Sigmoid colon (tissue), 7 donors: ENCODE measurements at regions of chr12 and their contacts with region 1.

Region 1: DNA sequence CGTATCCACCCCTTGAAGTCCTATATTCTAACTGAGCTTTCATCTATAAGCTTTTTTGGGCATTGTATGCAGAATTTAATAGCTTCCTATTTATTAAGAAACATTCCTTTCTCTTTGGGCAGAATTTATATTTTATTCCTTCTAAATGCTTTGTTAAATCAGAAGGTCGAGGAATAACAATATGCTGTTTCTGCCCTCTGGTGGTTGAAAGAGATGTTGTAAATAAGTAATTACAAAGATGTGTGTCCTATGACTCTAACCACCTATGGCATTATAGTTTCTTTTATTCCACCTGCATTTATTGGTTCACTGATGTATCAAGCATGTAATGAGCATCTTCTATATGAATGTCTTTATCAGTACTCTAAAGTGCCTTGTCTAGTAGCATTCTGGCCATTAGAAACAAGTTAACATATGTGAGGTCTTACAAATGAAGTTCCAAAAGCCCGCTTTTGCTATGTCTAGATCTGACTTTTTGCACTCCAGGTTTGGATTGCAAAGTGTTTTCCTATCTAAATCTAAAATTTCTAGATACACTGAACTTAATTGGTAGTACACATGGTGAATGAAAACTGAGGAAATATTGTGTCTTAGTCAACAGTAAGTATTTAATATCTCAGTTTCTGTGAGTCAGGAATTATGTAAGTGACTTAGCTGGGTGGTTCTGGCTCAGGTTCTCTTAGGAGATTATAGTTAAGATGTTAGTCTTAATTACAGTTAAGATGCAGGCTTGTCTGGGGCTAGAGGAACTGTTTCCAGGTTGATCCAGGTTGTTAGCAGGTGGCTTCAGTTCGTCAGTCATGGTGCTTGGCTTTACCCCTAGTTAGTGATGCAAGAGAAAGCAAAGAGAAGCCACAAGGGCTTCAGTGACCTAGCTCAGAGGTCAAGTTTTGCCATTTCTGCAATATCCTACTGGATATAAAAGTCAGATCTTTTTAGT is 57.5 kb downstream of the PLEKHA5 start:
- DNase-seq: no peak
- H3K4me3 ChIP-seq: no peak overlapping the region
- H3K27ac ChIP-seq: no peak overlapping the region
- H3K4me1 ChIP-seq: peaks cover 0 to 27% (median 13%) of the 10 kb centered on the region in 4 donors
- H3K27me3 ChIP-seq: no peaks in the 10 kb centered on the region
- CTCF ChIP-seq: peak; percentile 34 to 68 (median 60)
- EP300 ChIP-seq: no peak
- POLR2A ChIP-seq: no peak

Region 2: GRCh38 chr12:18250313-18250916 is 936.6 kb before region 1 on chr12:
- intact Hi-C with region 1: loop called (anchors 2 kb)
- DNase-seq: no peak
- H3K4me3 ChIP-seq: no peak overlapping the region
- H3K27ac ChIP-seq: no peak overlapping the region
- H3K4me1 ChIP-seq: no peaks in the 10 kb centered on the region
- H3K27me3 ChIP-seq: no peaks in the 10 kb centered on the region
- CTCF ChIP-seq: peak in 2 of 4 experiments; percentile 56 to 60
- EP300 ChIP-seq: no peak
- POLR2A ChIP-seq: no peak

Region 3: GRCh38 chr12:18430425-18431048 is 756.5 kb before region 1 on chr12:
- intact Hi-C with region 1: loop called (anchors 5 kb)
- DNase-seq: no peak
- H3K4me3 ChIP-seq: no peak overlapping the region
- H3K27ac ChIP-seq: no peak overlapping the region
- H3K4me1 ChIP-seq: peaks cover 0 to 6% (median 1%) of the 10 kb centered on the region in 4 donors
- H3K27me3 ChIP-seq: no peaks in the 10 kb centered on the region
- CTCF ChIP-seq: peak in 3 of 4 experiments; percentile 46 to 61 (median 48)
- EP300 ChIP-seq: no peak
- POLR2A ChIP-seq: no peak

Region 4: GRCh38 chr12:18849761-18850160 is 337.2 kb before region 1 on chr12:
- intact Hi-C with region 1: loop called (anchors 10 kb)
- DNase-seq: no peak
- H3K4me3 ChIP-seq: no peak overlapping the region
- H3K27ac ChIP-seq: no peak overlapping the region
- H3K4me1 ChIP-seq: no peaks in the 10 kb centered on the region
- H3K27me3 ChIP-seq: no peaks in the 10 kb centered on the region
- CTCF ChIP-seq: no peak
- EP300 ChIP-seq: no peak
- POLR2A ChIP-seq: no peak

Region 5: DNA sequence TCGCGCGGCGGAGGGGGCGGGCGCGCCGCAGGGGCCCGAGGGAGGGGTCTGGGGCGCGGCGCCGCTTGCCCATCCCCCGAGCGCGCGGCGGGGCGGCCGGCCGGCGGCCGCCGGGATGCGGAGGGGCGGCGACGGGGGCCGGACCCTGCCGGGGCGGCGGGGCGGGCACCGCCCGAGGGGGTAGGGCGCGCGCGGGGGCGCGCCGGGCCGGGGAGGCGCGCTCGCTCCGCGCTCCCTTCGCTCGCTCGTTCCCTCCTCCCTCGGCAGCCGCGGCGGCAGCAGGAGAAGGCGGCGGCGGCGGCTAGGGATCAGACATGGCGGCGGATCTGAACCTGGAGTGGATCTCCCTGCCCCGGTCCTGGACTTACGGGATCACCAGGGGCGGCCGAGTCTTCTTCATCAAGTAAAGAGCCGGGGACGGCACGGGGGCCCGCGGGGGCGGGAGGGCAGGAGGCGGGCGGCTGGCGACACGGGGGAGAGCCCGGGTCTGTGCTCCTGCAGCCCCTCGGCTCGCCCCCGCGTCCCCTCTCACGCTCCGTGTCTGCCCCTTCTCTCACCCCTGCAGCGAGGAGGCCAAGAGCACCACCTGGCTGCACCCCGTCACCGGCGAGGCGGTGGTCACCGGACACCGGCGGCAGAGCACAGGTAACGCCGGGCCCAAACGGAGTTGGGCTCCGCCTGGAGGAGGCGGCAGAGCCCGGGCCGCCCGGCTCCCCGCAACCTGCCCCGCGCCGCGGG is 57.3 kb before region 1 on chr12 and contains the start of gene PLEKHA5:
- intact Hi-C with region 1: loop called (anchors 5 kb)
- DNase-seq: peak; percentile 81
- H3K4me3 ChIP-seq: peak within 1 kb of the TSS; percentile 83 to 99 (median 94)
- H3K27ac ChIP-seq: peak within 1 kb of the TSS; percentile 88 to 92 (median 90)
- H3K4me1 ChIP-seq: peaks cover 0 to 17% (median 5%) of the 10 kb centered on the region in 4 donors
- H3K27me3 ChIP-seq: no peaks in the 10 kb centered on the region
- CTCF ChIP-seq: no peak
- EP300 ChIP-seq: no peak
- POLR2A ChIP-seq: no peak
- total RNA-seq, gene PLEKHA5: 14.7 to 32.6 (median 26.4) TPM

Region 6: GRCh38 chr12:19206493-19207077 is 19.6 kb after region 1 on chr12:
- intact Hi-C with region 1: no loop called
- DNase-seq: no peak
- H3K4me3 ChIP-seq: no peak overlapping the region
- H3K27ac ChIP-seq: no peak overlapping the region
- H3K4me1 ChIP-seq: no peaks in the 10 kb centered on the region
- H3K27me3 ChIP-seq: no peaks in the 10 kb centered on the region
- CTCF ChIP-seq: no peak
- EP300 ChIP-seq: no peak
- POLR2A ChIP-seq: no peak

Region 7: DNA sequence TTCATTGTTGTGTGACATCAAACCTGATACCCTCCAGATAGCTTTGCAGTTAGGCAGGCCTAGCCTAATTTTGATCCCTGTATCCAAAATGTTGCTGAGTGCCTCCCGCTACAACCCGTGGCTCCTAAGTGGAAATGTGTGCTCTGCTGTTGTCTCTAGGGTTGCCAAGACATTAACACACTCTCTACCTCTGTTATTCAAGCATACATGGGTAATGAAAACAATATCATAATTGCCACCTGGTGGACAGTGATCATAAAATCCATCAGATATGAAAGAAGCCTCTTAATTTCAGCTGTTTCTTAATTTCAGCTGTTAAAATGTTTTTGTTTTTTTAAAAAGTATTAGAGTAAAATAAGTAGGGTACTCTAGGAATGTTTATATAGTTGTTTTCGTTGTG is 36.0 kb after region 1 on chr12:
- intact Hi-C with region 1: no loop called
- DNase-seq: no peak
- H3K4me3 ChIP-seq: no peak overlapping the region
- H3K27ac ChIP-seq: peak overlapping the region in 1 of 4 donors; percentile 27
- H3K4me1 ChIP-seq: peaks cover 0 to 10% (median 5%) of the 10 kb centered on the region in 4 donors
- H3K27me3 ChIP-seq: no peaks in the 10 kb centered on the region
- CTCF ChIP-seq: no peak
- EP300 ChIP-seq: no peak
- POLR2A ChIP-seq: no peak

Region 8: DNA sequence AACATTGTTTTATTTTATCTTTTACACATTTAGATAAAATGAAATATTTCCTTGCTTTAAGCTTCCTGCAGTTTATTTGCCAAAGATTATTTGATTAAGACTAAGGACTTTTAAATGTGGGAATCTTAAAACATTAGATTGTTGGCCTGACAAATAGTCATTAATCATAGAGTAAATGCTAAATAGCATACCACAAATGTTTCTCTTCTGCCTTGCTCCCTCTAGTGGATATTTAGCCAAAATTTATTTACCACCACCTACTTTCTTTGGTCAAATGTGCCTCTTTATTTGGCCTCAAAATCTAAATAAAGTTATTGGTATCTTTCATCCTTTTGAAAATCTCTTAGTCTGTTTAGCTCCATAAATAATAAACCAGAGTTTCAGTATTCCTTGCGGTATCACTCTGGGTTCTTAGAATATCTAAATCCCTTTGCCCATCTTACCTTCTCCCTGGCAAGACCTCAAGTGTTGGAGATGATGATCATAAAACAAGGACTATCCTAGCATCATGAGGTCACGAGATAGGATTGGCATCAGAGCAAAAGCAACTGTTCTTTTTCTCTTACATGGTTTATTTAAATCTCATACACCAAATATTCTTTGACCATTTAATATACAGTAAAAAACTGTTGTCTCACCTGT is 101.7 kb after region 1 on chr12:
- intact Hi-C with region 1: loop called (anchors 10 kb)
- DNase-seq: no peak
- H3K4me3 ChIP-seq: no peak overlapping the region
- H3K27ac ChIP-seq: no peak overlapping the region
- H3K4me1 ChIP-seq: peaks cover 0 to 22% (median 7%) of the 10 kb centered on the region in 4 donors
- H3K27me3 ChIP-seq: no peaks in the 10 kb centered on the region
- CTCF ChIP-seq: peak in 2 of 4 experiments; percentile 45 to 51
- EP300 ChIP-seq: no peak
- POLR2A ChIP-seq: no peak

Region 9: DNA sequence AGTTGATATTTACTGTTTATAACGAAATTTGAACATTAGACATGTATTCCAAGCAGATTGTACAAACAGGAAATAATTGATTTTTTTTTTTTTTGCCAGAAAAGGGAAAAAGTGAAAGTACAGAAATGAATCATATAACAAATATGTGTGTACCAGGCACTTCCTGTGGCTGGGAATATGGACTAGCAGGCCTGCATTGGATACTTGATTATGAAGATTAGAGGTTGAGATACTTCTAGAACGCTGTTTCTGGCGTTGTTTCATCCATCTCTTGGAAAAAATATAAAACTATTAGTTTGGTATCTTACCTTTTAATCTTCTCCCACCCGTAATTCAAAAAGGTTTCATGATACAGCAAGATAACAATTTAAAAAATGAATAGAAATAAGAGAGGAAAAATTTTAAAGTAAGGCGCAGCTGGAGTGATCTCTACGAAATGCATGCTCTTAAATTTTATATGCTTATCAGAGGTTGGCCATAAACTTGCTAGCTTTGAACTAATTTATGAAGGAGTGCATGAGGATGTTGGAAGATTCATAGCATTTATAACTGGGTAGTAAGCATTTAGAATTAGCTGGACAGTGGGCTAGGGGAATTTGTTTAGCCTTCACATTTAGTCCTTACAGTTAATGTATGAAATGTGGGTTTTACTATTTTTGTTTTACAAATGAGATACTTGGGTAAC is 343.1 kb after region 1 on chr12:
- intact Hi-C with region 1: no loop called
- DNase-seq: no peak
- H3K4me3 ChIP-seq: no peak overlapping the region
- H3K27ac ChIP-seq: no peak overlapping the region
- H3K4me1 ChIP-seq: peaks cover 0 to 9% (median 6%) of the 10 kb centered on the region in 4 donors
- H3K27me3 ChIP-seq: no peaks in the 10 kb centered on the region
- CTCF ChIP-seq: no peak
- EP300 ChIP-seq: no peak
- POLR2A ChIP-seq: no peak